T-cell (primary cell): ENCODE measurements at regions of chr11 and their contacts with region 1.

Region 1: GRCh38 chr11:59158206-59159068 is 13.5 kb upstream of the DTX4 start:
- DNase-seq: peak; percentile 26 to 88 (median 52)
- ATAC-seq: peak; percentile 88 to 99 (median 94)
- H3K4me3 ChIP-seq: no peak overlapping the region
- H3K4me3 Mint-ChIP-seq: no peak overlapping the region
- H3K27ac ChIP-seq: no peak overlapping the region
- H3K27ac Mint-ChIP-seq: no peak overlapping the region
- H3K4me1 ChIP-seq: peaks cover 0 to 3% of the 10 kb centered on the region in 2 experiments
- H3K4me1 Mint-ChIP-seq: peaks cover 4 to 5% (median 4%) of the 10 kb centered on the region in 3 donors
- H3K27me3 ChIP-seq: peaks cover 0 to 5% of the 10 kb centered on the region in 2 experiments
- H3K27me3 Mint-ChIP-seq: peaks cover 13 to 19% of the 10 kb centered on the region in 2 donors

Region 2: DNA sequence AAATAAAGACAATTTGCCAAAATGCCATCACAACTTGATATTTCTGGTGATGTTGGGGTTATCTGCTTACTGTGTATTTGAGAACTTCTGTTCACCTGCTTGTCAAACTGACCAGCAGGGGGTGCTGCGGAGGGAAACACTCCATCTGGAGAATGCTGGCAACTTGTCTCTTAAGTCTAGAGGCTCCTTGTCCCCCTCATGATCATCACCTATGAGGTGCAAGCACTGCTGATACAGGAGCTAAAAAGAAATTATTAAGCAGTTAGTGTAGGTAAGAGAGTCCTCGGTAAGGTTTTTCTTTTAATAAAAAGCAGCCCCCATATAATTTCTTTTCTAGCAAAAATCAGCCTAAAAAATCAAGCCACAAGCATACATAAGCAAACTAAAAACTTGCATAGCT is 105.0 kb before region 1 on chr11:
- CTCF ChIA-PET with region 1: interaction called, 6 to 19 read pairs
- POLR2A ChIA-PET with region 1: no interaction called
- DNase-seq: peak; percentile 49 to 85 (median 73)
- ATAC-seq: peak in 3 of 4 experiments; percentile 53 to 75 (median 67)
- H3K4me3 ChIP-seq: no peak overlapping the region
- H3K4me3 Mint-ChIP-seq: no peak overlapping the region
- H3K27ac ChIP-seq: no peak overlapping the region
- H3K27ac Mint-ChIP-seq: no peak overlapping the region
- H3K4me1 ChIP-seq: peaks cover 0 to 6% of the 10 kb centered on the region in 2 experiments
- H3K4me1 Mint-ChIP-seq: peaks cover 5 to 9% (median 8%) of the 10 kb centered on the region in 3 donors
- H3K27me3 ChIP-seq: peaks cover 0 to 5% of the 10 kb centered on the region in 2 experiments
- H3K27me3 Mint-ChIP-seq: peaks cover 12 to 13% of the 10 kb centered on the region in 2 donors

Region 3: DNA sequence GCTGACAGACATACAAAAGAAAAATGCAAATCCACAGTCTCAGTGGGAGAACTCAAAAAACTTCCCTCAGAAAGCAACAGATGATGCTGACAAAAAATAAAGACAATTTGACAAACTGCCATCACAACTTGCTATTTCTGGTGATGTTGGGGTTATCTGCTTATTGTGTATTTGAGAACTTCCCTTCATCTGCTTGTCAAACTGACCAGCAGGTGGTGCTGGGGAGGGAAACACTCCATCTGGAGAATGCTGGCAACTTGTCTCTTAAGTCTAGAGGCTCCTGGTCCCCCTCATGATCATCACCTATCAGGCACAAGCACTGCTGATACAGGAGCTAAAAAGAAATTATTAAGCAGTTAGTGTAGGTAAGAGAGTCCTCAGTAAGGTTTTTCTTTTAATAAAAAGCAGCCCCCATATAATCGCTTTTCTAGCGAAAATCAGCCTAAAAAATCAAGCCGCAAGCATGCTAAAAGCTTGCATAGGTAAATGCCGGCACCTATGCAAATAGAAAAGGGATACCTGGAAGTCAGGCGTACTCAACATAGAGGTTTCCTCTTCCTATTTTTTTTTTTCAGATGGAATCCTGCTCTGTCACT is 61.2 kb before region 1 on chr11:
- CTCF ChIA-PET with region 1: interaction called, 8 to 13 read pairs
- POLR2A ChIA-PET with region 1: interaction called, 3 read pairs
- DNase-seq: peak; percentile 37 to 81 (median 61)
- ATAC-seq: peak; percentile 47 to 77 (median 61)
- H3K4me3 ChIP-seq: no peak overlapping the region
- H3K4me3 Mint-ChIP-seq: no peak overlapping the region
- H3K27ac ChIP-seq: no peak overlapping the region
- H3K27ac Mint-ChIP-seq: no peak overlapping the region
- H3K4me1 ChIP-seq: peaks cover 0 to 8% of the 10 kb centered on the region in 2 experiments
- H3K4me1 Mint-ChIP-seq: peaks cover 6 to 16% (median 14%) of the 10 kb centered on the region in 3 donors
- H3K27me3 ChIP-seq: peaks cover 0 to 10% of the 10 kb centered on the region in 2 experiments
- H3K27me3 Mint-ChIP-seq: peaks cover 15 to 36% of the 10 kb centered on the region in 2 donors

Region 4: DNA sequence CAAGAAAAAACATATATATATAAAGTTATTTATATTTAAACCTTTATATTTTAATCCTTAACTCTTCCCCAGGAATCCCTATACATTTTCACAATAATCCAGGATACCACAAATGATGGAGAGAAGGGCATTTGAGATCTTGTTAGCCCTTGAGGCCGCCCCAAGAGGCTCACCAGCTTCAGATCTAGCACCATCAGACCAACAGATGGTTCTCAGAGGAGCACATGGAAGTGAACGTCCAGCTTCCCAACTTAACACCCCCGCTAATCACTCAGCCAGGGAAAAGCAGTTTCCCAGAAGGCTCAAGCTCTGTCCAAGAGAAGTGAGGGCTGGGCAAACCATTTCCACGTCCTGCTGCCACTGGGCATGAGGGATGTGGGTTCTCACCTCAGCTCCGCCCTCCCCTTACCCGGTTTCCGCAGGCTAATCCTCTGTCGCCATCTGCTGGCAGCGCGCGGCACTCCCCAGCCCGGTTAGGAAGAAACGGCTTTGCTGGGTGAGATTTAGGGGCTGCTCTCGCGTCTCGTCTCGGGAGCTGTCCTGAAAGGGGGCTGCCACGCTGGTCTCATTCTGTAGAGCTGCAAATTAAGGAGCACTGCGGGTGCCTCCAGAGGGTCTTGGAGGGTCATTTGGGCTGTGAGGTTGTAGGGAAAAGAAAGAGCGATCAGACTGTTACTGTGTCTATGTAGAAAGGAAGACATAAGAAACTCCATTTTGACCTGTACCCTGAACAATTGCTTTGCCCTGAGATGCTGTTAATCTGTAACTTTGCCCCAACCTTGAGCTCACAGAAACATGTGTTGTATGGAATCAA is 22.6 kb before region 1 on chr11:
- CTCF ChIA-PET with region 1: interaction called, 6 to 20 read pairs
- POLR2A ChIA-PET with region 1: no interaction called
- DNase-seq: peak; percentile 65 to 92 (median 85)
- ATAC-seq: peak; percentile 100
- H3K4me3 ChIP-seq: no peak overlapping the region
- H3K4me3 Mint-ChIP-seq: peak overlapping the region in 1 of 3 donors; percentile 41
- H3K27ac ChIP-seq: peak overlapping the region; percentile 34
- H3K27ac Mint-ChIP-seq: peak overlapping the region in 1 of 2 donors; percentile 75
- H3K4me1 ChIP-seq: peaks cover 2 to 8% of the 10 kb centered on the region in 2 experiments
- H3K4me1 Mint-ChIP-seq: peaks cover 9 to 12% (median 9%) of the 10 kb centered on the region in 3 donors
- H3K27me3 ChIP-seq: no peaks in the 10 kb centered on the region
- H3K27me3 Mint-ChIP-seq: no peaks in the 10 kb centered on the region

Region 5: DNA sequence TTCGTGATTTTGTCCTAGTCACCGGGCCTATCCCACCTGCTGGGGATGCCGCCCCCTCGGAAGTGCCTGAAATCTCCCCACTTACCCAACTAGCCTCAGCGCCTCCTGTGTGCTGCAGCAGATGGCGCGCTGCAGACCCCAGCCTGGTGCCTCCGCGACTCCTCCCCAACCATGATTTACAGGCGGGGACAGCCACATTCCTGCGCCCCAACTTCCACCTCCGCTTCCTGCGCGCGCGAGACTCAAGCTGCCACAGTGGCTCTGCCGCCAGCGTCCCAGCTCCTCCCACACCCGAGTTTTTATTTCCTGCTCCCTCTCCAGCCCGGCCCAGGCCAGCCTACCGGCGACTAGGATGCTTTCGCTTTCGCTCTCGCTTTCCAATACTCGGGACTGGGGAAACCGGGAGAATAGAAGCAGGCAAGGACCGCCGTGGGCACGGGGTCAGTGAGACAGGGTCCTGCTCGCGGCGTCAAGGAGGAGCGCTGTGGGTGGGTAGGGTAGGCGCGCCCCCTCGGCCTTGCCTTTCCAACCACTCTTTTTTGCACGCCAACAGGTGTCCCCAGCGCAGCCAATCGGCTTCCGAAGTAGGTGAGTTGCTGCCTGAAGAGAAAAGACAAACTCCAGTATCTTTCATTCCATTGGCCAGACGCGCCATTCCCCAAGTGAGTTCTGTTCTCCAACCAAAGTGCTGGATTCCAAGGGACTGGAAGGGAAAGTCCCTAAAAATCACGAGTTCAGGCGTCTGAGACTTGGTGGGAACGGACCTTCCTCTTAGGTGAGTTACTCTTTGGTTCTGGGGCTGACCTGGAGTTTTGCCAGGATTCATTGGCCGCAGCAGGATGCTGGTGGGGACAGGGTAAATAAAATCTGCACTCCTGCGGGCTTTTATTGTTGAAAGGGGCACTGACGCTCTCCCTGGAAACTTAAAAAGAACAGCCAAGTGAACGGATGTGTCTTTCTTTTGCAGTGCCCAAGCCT is 15.6 kb before region 1 on chr11 and contains the start of gene FAM111A:
- CTCF ChIA-PET with region 1: interaction called, 6 to 24 read pairs
- POLR2A ChIA-PET with region 1: interaction called in 1 of 2 experiments, 3 read pairs
- DNase-seq: peak; percentile 69 to 93 (median 85)
- ATAC-seq: peak; percentile 83 to 89 (median 87)
- H3K4me3 ChIP-seq: peak within 1 kb of the TSS; percentile 77 to 87
- H3K4me3 Mint-ChIP-seq: peak within 1 kb of the TSS; percentile 93 to 97 (median 97)
- H3K27ac ChIP-seq: peak within 1 kb of the TSS; percentile 93
- H3K27ac Mint-ChIP-seq: peak within 1 kb of the TSS; percentile 92 to 95
- H3K4me1 ChIP-seq: peaks cover 21 to 26% of the 10 kb centered on the region in 2 experiments
- H3K4me1 Mint-ChIP-seq: peaks cover 50 to 56% (median 51%) of the 10 kb centered on the region in 3 donors
- H3K27me3 ChIP-seq: no peaks in the 10 kb centered on the region
- H3K27me3 Mint-ChIP-seq: no peaks in the 10 kb centered on the region
- total RNA-seq, gene FAM111A: 75.9 to 90.2 (median 78.9) TPM